CD8-positive, alpha-beta T cell (primary cell): ENCODE measurements at regions of chr6 and their contacts with region 1.

Region 1: DNA sequence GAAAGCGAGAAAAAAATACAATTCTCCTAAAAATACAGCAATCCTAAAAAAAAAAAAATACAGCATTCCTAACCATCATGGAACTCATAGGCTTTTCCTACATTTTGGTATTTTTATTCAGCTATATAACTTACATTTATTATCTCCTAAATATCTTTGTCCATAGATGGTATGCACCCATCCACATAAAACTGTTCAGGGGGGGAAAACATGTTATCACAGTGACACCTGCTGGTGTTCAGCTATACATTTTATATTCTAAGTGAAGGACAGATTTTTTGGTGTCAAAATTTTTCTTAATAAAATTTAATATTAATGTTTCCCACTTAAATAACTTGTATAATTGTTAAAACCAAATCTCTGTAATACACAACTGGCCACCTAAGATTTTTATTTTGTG is 58.0 kb downstream of the BLOC1S5 start:
- DNase-seq: peak in 2 of 9 experiments; percentile 22 to 33
- ATAC-seq: no peak
- H3K4me3 ChIP-seq: no peak overlapping the region
- H3K4me3 Mint-ChIP-seq: no peak overlapping the region
- H3K27ac ChIP-seq: no peak overlapping the region
- H3K27ac Mint-ChIP-seq: no peak overlapping the region
- H3K4me1 ChIP-seq: no peaks in the 10 kb centered on the region
- H3K4me1 Mint-ChIP-seq: peaks cover 4% of the 10 kb centered on the region
- H3K27me3 ChIP-seq: no peaks in the 10 kb centered on the region
- H3K27me3 Mint-ChIP-seq: no peaks in the 10 kb centered on the region
- CTCF ChIP-seq: peak; percentile 33

Region 2: DNA sequence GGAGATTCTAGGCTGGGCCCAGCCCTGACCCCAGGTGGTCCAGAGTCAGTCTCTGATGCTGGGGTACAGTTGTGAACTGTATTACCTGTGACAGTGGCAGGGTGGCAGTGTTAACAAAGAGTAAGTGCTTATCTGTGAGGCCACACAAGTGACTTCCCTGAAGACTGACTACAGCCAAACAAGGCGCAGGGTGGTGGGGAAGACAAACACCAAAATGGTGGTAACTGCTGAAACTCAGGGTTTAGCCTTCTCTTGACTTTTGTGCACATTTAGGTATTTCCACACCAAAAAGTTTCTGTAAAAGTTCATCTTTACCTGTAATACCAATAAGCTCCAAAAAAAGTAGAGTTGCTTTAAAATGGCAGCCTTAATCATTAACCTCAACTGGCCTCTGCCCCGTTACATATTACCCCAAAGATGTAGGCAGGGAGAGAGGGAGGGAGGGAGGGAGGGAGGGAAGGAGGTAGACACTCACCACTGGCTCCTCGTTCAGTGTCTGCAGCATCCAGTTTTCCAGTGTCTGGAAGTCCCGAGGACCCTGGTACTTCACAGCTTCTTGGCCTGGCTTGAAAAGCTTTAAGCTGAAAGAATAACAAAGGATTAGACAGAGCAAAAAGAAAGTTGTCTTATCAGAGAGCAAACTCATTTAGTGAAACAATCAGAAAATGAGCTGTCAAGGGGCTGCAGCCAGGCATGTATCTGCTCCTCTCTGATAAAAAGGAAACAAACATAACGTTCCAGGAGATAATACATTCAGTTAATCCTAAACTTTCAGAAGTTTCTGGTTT is 106.9 kb before region 1 on chr6:
- CTCF ChIA-PET with region 1: no interaction called
- POLR2A ChIA-PET with region 1: no interaction called
- intact Hi-C with region 1: loop called in 1 of 2 experiments (anchors 10 kb)
- DNase-seq: peak in 2 of 9 experiments; percentile 10 to 25
- ATAC-seq: no peak
- H3K4me3 ChIP-seq: no peak overlapping the region
- H3K4me3 Mint-ChIP-seq: no peak overlapping the region
- H3K27ac ChIP-seq: no peak overlapping the region
- H3K27ac Mint-ChIP-seq: no peak overlapping the region
- H3K4me1 ChIP-seq: no peaks in the 10 kb centered on the region
- H3K4me1 Mint-ChIP-seq: no peaks in the 10 kb centered on the region
- H3K27me3 ChIP-seq: no peaks in the 10 kb centered on the region
- H3K27me3 Mint-ChIP-seq: no peaks in the 10 kb centered on the region
- CTCF ChIP-seq: no peak